Common myeloid progenitor, CD34-positive (primary cell): ENCODE measurements at regions of chr17 and their contacts with region 1.

Region 1: DNA sequence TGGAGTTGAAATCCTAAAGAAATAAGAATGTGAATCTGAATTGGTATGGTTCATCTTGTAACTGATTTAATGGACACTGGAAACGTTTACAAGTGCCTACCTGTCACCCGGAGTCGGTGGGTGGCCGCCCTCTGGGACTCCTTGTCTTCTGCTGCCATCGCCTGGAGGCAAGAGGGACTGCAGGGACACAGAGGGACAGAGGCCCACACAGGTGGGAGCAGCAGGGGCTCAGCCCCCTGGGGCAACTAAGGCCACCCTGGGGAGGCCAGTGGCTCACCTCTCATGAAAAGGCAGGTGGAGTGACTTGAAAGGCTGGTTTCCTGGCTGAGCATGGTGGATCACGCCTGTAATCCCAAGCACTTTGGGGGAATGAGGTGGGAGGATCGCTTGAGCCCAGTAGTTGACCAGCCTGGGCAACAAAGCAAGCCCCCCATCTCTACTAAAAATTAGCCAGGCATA is 23.2 kb downstream of the TMEM92 start:
- DNase-seq: peak; percentile 67 to 81 (median 77)
- H3K4me3 ChIP-seq: no peak overlapping the region
- H3K27ac ChIP-seq: no peak overlapping the region
- H3K4me1 ChIP-seq: peaks cover 0 to 10% (median under 1%) of the 10 kb centered on the region in 4 experiments
- H3K27me3 ChIP-seq: no peaks in the 10 kb centered on the region

Region 2: GRCh38 chr17:50169121-50169764 is 128.2 kb before region 1 on chr17:
- CTCF ChIA-PET with region 1: interaction called, 46 read pairs
- POLR2A ChIA-PET with region 1: no interaction called
- DNase-seq: peak; percentile 86 to 93 (median 92)
- H3K4me3 ChIP-seq: peak overlapping the region in 2 of 7 experiments; percentile 15 to 64
- H3K27ac ChIP-seq: no peak overlapping the region
- H3K4me1 ChIP-seq: peaks cover 0 to 9% (median 5%) of the 10 kb centered on the region in 4 experiments
- H3K27me3 ChIP-seq: no peaks in the 10 kb centered on the region

Region 3: DNA sequence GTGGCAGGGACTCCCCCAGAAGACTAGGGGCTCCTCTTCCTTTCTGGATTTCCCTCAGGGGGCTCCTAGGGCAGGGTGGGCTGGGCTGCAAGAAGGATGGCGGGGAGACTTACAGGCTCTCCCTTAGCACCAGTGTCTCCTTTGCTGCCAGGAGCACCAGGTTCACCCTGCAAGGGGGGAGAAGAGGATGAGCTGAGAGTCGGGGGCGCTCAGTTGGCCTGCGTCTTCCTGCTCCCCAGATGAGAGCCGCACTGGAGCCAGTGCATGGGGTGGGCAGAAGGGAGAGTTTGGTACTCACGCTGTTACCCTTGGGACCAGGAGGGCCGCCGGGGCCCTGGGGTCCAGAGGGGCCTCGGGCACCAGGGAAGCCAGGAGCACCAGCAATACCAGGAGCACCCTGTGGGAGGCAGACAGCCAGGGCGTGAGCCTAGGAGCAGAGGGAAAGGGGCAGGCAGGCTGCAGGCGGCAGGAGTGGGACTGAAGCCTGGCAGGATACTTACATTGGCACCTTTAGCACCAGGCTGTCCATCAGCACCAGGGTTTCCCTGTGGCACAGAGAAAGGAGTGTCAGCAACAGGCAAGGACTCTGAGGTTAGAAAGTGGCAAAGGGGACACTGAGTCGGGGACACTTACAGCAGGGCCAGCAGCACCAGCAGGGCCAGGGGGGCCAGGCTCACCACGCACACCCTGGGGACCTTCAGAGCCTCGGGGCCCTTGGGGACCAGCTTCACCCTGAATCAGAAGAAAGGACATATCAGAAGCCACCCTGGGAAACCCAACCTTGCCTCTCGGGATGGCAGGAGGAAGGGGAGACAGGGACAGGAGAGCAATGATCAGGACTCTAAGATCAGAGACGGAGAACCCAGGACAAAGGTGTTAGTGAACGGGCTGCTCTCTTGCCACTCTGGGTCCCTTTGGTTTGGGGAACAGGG is 102.2 kb before region 1 on chr17:
- CTCF ChIA-PET with region 1: interaction called, 276 read pairs
- POLR2A ChIA-PET with region 1: interaction called, 3 read pairs
- DNase-seq: no peak
- H3K4me3 ChIP-seq: no peak overlapping the region
- H3K27ac ChIP-seq: no peak overlapping the region
- H3K4me1 ChIP-seq: peaks cover 0 to 10% (median 5%) of the 10 kb centered on the region in 4 experiments
- H3K27me3 ChIP-seq: peaks cover 0 to 4% (median 2%) of the 10 kb centered on the region in 5 experiments

Region 4: GRCh38 chr17:50213026-50214022 is 84.1 kb before region 1 on chr17:
- CTCF ChIA-PET with region 1: interaction called, 276 read pairs
- POLR2A ChIA-PET with region 1: no interaction called
- DNase-seq: peak; percentile 46 to 87 (median 87)
- H3K4me3 ChIP-seq: no peak overlapping the region
- H3K27ac ChIP-seq: no peak overlapping the region
- H3K4me1 ChIP-seq: peaks cover 0 to 12% (median 5%) of the 10 kb centered on the region in 4 experiments
- H3K27me3 ChIP-seq: peaks cover 0 to 11% (median 0%) of the 10 kb centered on the region in 5 experiments

Region 5: GRCh38 chr17:50269477-50270434 is 27.7 kb before region 1 on chr17:
- CTCF ChIA-PET with region 1: interaction called, 75 read pairs
- POLR2A ChIA-PET with region 1: no interaction called
- DNase-seq: peak; percentile 53 to 74 (median 58)
- H3K4me3 ChIP-seq: no peak overlapping the region
- H3K27ac ChIP-seq: no peak overlapping the region
- H3K4me1 ChIP-seq: peaks cover 0 to 67% (median 53%) of the 10 kb centered on the region in 4 experiments
- H3K27me3 ChIP-seq: peaks cover 0 to 6% (median 0%) of the 10 kb centered on the region in 5 experiments

Region 6: DNA sequence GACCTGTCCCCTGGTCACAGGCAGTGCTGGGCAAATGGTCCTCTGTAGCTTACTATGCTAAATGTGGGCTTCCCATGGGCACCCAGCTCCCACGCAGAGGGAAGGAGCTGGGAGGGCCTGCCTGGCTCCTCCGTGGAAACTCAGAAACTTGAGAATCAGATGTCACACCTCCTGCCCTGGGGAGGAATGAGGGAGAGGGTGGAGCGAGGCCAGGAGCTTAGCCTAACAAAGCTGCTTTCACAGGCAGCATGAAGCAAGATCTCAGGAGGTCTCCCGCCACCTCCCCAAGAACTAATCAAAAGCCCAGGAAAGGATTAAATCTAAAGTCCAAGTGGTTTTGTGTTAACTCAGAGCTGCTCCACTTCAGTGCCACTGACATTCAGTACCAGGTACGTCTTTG is 14.9 kb after region 1 on chr17:
- CTCF ChIA-PET with region 1: interaction called, 19 read pairs
- POLR2A ChIA-PET with region 1: interaction called, 4 read pairs
- DNase-seq: no peak
- H3K4me3 ChIP-seq: no peak overlapping the region
- H3K27ac ChIP-seq: no peak overlapping the region
- H3K4me1 ChIP-seq: no peaks in the 10 kb centered on the region
- H3K27me3 ChIP-seq: peaks cover 0 to 5% (median 0%) of the 10 kb centered on the region in 5 experiments

Region 7: GRCh38 chr17:50331085-50331791 is 33.8 kb after region 1 on chr17:
- CTCF ChIA-PET with region 1: interaction called, 11 read pairs
- POLR2A ChIA-PET with region 1: interaction called, 4 read pairs
- DNase-seq: no peak
- H3K4me3 ChIP-seq: no peak overlapping the region
- H3K27ac ChIP-seq: no peak overlapping the region
- H3K4me1 ChIP-seq: peaks cover 0 to 6% (median 4%) of the 10 kb centered on the region in 4 experiments
- H3K27me3 ChIP-seq: peaks cover 0 to 2% (median 0%) of the 10 kb centered on the region in 5 experiments